ENCODE measurements at regions of chr2 and their contacts with region 1.

Region 1: GRCh38 chr2:21561965-21562364 is 438.2 kb downstream of the TDRD15 start:
- DNase-seq: no peak
- H3K4me3 ChIP-seq: no peak overlapping the region
- H3K27ac ChIP-seq: no peak overlapping the region
- H3K4me1 ChIP-seq: no peaks in the 10 kb centered on the region
- H3K27me3 ChIP-seq: no peaks in the 10 kb centered on the region
- CTCF ChIP-seq: no peak
- EP300 ChIP-seq: no peak
- POLR2A ChIP-seq: no peak

Region 2: DNA sequence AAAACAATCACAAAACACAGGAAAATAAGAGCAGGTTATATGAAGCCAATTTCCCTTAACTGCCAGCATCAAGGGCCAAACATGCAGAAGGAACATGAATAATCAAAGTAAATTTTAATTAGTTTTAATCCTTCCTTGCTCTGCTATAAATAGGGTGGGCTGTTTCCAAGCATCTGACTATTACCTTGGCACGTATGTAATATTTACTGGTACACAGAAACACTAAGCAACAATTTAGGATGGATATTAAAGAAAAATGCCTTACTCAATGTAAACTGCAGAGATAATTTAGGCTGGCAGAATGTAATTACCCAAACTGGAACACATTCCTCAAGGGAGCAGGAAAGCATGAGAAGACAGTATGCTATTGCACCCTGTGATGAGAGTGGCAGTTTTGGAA is 30.0 kb after region 1 on chr2:
- intact Hi-C with region 1: loop called (anchors 2 kb)
- DNase-seq: no peak
- H3K4me3 ChIP-seq: no peak overlapping the region
- H3K27ac ChIP-seq: no peak overlapping the region
- H3K4me1 ChIP-seq: no peaks in the 10 kb centered on the region
- H3K27me3 ChIP-seq: no peaks in the 10 kb centered on the region
- CTCF ChIP-seq: no peak
- EP300 ChIP-seq: no peak
- POLR2A ChIP-seq: no peak